Ovary (tissue), 10 donors: ENCODE measurements at regions of chr1 and their contacts with region 1.

Region 1: DNA sequence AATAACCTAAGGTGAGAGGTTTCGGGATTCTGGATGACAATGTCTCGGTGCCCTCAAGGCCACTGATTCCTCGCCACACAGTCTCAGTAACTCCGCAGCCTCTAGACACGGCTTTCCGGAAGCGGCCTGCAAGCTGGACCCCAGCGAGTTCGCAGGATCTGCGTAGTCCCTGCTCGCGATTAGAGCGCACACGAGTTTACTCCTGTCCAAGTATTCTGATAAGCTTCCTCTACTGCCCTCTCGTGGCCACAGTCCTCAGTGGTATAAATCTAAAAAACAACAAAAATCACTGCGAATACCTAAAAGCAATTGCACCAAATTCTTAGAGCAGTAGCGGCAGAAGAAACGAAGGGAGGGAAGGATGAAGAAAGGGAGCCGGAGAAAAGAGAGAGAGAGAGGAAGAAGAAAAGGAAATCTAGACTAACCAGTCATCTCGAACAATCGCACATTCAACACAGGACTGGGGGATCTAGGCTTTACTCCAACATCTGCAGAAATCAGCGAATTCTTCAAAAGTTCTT is 1.1 kb upstream of the PLXNA2 start:
- DNase-seq: peak; percentile 92 to 97 (median 95)
- H3K4me3 ChIP-seq: peak overlapping the region; percentile 71
- H3K27ac ChIP-seq: peak overlapping the region; percentile 40 to 80
- H3K4me1 ChIP-seq: peaks cover 8% of the 10 kb centered on the region
- H3K27me3 ChIP-seq: no peaks in the 10 kb centered on the region
- CTCF ChIP-seq: peak; percentile 83 to 95 (median 94)
- EP300 ChIP-seq: no peak
- POLR2A ChIP-seq: peak; percentile 22

Region 2: DNA sequence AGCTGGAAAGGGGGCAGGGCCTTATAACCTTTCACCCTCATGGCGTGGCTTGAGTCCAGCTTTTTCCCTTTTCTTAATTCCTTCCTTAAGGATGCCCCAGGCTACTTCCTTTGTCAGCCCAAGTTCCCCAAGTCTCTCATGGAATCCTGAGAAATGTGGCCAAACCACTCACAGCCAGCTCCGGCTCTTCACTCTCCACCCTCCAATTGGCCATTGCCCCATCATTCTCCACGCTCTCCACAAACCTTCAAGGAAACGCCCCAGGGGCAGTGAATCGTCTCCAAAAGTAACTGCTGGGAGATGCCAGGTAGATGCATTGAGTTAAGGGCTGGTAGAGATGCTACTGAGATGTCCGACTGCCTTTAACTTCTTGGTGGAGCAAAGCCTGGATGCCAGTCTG is 220.8 kb before region 1 on chr1:
- intact Hi-C with region 1: loop called (anchors 5 kb)
- DNase-seq: no peak
- H3K4me3 ChIP-seq: no peak overlapping the region
- H3K27ac ChIP-seq: no peak overlapping the region
- H3K4me1 ChIP-seq: peaks cover 6% of the 10 kb centered on the region
- H3K27me3 ChIP-seq: no peaks in the 10 kb centered on the region
- CTCF ChIP-seq: no peak
- EP300 ChIP-seq: no peak
- POLR2A ChIP-seq: no peak

Region 3: GRCh38 chr1:208047476-208047934 is 197.7 kb before region 1 on chr1:
- intact Hi-C with region 1: loop called in 1 of 4 experiments (anchors 5 kb)
- DNase-seq: peak; percentile 85 to 96 (median 96)
- H3K4me3 ChIP-seq: no peak overlapping the region
- H3K27ac ChIP-seq: peak overlapping the region; percentile 40 to 79
- H3K4me1 ChIP-seq: peaks cover 42% of the 10 kb centered on the region
- H3K27me3 ChIP-seq: no peaks in the 10 kb centered on the region
- CTCF ChIP-seq: no peak
- EP300 ChIP-seq: peak; percentile 19
- POLR2A ChIP-seq: no peak

Region 4: DNA sequence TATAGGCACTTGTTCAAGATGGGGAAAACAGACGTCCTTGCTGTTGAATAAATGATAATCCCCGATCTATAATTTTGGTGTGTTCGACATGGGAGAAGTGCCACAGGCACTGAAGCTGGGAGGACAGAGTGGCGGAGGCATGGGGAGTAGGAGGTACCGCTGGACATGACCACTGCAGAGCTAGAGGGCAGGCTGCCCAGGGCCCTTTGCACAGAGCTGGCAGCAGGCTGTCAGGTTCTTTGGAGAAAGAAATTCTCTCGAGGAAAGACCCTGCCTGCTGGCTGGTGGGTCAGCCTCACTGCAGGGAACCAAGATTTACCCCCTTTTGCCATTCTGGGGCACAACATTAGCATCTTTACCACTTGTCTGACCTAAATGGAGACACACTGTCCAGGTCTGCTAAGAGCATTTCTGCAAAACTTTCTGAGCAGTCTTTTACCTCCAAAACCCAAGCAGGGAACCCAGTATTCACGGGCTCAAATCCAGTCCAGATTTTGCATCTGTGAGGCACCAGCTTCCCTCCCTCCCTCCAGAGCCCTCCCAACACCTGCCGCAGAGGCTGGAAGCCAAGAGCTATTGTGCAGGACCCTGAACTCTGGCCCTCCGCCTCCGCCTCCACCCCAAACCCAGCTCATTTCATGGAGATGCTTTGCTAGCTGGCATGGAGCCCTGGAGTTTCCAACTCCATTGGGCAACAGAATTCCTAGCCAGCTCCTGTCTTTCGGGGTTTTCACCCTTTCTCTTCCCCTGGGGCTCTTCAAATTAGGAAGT is 143.4 kb before region 1 on chr1:
- intact Hi-C with region 1: loop called in 1 of 4 experiments (anchors 5 kb)
- DNase-seq: peak; percentile 85 to 91 (median 88)
- H3K4me3 ChIP-seq: no peak overlapping the region
- H3K27ac ChIP-seq: no peak overlapping the region
- H3K4me1 ChIP-seq: peaks cover 14% of the 10 kb centered on the region
- H3K27me3 ChIP-seq: no peaks in the 10 kb centered on the region
- CTCF ChIP-seq: no peak
- EP300 ChIP-seq: no peak
- POLR2A ChIP-seq: no peak